Activated naive CD8-positive, alpha-beta T cell treated with anti-CD3 and anti-CD28 coated beads, Interleukin-2, amount 10 ng/mL, durations not matched to agents 7 days and 5 days (primary cell): ENCODE measurements at regions of chr4 and their contacts with region 1.

Region 1: DNA sequence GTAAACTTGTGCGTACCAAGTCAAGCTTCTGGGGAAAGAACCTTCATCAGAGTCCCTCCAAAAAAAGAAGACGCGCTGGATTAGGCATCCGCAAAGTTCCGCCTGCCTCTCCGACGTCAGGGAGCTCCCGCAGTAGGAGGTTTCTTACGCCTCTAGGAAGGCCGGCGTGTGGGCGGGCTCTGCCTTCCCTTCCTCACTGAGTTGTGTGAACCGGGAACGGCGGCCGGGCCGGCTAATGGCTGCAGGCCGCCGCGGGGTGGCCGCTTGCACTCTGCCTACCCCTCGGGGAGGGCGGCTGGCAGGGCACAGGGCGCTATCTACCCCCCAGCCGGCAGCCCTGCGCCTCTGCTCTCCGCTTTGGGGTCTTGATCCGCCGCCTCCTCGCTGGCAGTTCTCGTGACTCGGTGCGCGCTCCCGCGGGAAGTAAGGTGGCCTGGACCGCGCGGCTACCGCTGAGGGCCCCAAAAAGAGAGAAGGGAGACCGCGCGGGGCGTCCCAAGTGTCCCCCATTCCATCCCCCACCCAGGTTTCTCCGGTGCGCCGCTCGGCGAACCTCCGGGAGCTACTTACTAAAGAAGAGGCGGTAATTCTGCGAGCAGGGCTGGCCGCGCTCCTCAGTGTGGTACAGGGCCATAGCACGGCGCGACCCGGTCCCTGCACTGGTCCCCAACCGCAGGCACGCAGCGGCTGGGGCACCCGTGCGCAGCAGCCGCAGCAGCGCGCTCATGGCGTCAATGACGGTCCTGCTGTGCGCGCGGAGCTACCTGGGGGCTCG is at the start of gene PPA2:
- DNase-seq: peak; percentile 90
- ATAC-seq: peak; percentile 84
- H3K4me3 Mint-ChIP-seq: peak within 1 kb of the TSS; percentile 98
- H3K27ac Mint-ChIP-seq: peak within 1 kb of the TSS; percentile 97
- H3K4me1 Mint-ChIP-seq: peaks cover 31% of the 10 kb centered on the region
- H3K27me3 Mint-ChIP-seq: peaks cover 2% of the 10 kb centered on the region
- total RNA-seq, gene PPA2: 72.0 to 81.9 TPM

Region 2: DNA sequence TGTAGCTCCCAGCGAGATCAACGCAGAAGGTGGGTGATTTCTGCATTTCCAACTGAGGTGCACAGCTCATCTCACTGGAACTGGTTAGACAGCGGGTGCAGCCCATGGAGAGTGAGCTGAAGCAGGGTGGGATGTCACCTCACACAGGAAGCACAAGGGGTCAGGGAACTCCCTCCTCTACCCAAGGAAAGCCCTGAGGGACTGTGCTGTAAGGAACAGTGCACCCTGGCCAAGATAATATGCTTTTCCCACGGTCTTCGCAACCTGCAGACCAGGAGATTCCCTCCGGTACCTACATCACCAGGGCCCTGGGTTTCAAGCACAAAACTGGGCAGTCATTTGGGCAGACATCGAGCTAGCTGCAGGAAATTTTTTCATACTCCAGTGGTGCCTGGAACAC is 543.2 kb before region 1 on chr4:
- POLR2A ChIA-PET with region 1: interaction called, 16 read pairs
- DNase-seq: no peak
- ATAC-seq: no peak
- H3K4me3 Mint-ChIP-seq: peak overlapping the region; percentile 36
- H3K27ac Mint-ChIP-seq: peak overlapping the region; percentile 89
- H3K4me1 Mint-ChIP-seq: peaks cover 40% of the 10 kb centered on the region
- H3K27me3 Mint-ChIP-seq: no peaks in the 10 kb centered on the region

Region 3: DNA sequence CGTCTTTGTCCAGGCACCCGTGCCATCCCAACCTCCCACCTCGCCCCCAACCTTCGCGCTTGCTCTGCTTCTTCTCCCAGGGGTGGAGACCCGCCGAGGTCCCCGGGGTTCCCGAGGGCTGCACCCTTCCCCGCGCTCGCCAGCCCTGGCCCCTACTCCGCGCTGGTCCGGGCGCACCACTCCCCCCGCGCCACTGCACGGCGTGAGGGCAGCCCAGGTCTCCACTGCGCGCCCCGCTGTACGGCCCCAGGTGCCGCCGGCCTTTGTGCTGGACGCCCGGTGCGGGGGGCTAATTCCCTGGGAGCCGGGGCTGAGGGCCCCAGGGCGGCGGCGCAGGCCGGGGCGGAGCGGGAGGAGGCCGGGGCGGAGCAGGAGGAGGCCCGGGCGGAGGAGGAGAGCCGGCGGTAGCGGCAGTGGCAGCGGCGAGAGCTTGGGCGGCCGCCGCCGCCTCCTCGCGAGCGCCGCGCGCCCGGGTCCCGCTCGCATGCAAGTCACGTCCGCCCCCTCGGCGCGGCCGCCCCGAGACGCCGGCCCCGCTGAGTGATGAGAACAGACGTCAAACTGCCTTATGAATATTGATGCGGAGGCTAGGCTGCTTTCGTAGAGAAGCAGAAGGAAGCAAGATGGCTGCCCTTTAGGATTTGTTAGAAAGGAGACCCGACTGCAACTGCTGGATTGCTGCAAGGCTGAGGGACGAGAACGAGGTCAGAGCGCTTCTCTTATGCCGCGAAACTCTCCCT is 327.1 kb before region 1 on chr4 and contains the start of gene TET2:
- POLR2A ChIA-PET with region 1: interaction called, 17 read pairs
- DNase-seq: peak; percentile 84
- ATAC-seq: peak; percentile 93
- H3K4me3 Mint-ChIP-seq: peak within 1 kb of the TSS; percentile 95
- H3K27ac Mint-ChIP-seq: peak within 1 kb of the TSS; percentile 99
- H3K4me1 Mint-ChIP-seq: peaks cover 24% of the 10 kb centered on the region
- H3K27me3 Mint-ChIP-seq: no peaks in the 10 kb centered on the region
- total RNA-seq, gene TET2: 29.2 to 31.4 TPM